ENCODE measurements at regions of chr22 and their contacts with region 1.

Region 1: DNA sequence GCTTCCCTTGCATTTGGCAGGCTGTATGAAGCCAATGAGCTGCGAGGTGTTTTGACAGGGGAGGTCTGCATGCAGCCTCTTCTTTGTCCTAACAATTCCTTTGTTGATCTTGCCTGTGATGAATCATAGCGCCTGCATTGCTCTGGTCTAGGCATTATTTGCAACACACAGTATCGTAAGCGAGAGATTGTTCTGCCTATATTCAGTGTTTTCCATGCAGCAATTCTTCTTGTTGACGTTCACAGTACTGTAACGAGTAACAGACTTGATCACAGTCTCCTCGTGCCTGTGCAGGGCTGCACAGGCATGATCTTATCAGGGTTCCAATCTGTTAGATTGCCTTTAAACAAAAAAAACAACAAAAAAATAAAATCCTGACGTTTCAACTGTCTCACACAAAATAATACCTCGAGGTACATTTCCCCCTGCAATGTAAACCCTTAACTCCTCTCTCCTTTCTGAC is 13.9 kb upstream of the ADSL start:
- DNase-seq: no peak
- ATAC-seq: no peak
- H3K4me3 ChIP-seq: no peak overlapping the region
- H3K27ac ChIP-seq: no peak overlapping the region
- H3K4me1 ChIP-seq: peaks cover 4% of the 10 kb centered on the region in 2 donors
- H3K27me3 ChIP-seq: no peaks in the 10 kb centered on the region
- CTCF ChIP-seq: no peak
- POLR2A ChIP-seq: no peak

Region 2: GRCh38 chr22:40247976-40248375 is 84.4 kb before region 1 on chr22:
- in situ Hi-C with region 1: no loop called
- intact Hi-C with region 1: loop called (anchors 5 kb)
- DNase-seq: no peak
- ATAC-seq: no peak
- H3K4me3 ChIP-seq: no peak overlapping the region
- H3K27ac ChIP-seq: no peak overlapping the region
- H3K4me1 ChIP-seq: peaks cover 0 to 3% of the 10 kb centered on the region in 2 donors
- H3K27me3 ChIP-seq: no peaks in the 10 kb centered on the region
- CTCF ChIP-seq: no peak
- POLR2A ChIP-seq: no peak